ENCODE measurements at regions of chr12 and their contacts with region 1.

Region 1: GRCh38 chr12:53613821-53614220 is 12.4 kb downstream of the ATF7 start:
- DNase-seq: no peak
- ATAC-seq: no peak
- H3K4me3 Mint-ChIP-seq: no peak overlapping the region
- H3K27ac Mint-ChIP-seq: no peak overlapping the region
- H3K4me1 Mint-ChIP-seq: peaks cover 23% of the 10 kb centered on the region
- H3K27me3 Mint-ChIP-seq: no peaks in the 10 kb centered on the region
- CTCF ChIP-seq: no peak

Region 2: GRCh38 chr12:53625946-53626701 is 12.3 kb after region 1 on chr12 and contains the start of gene ATF7:
- CTCF ChIA-PET with region 1: interaction called, 31 read pairs
- POLR2A ChIA-PET with region 1: interaction called, 5 read pairs
- intact Hi-C with region 1: no loop called
- DNase-seq: peak; percentile 98
- ATAC-seq: peak; percentile 95
- H3K4me3 Mint-ChIP-seq: peak within 1 kb of the TSS; percentile 97
- H3K27ac Mint-ChIP-seq: peak within 1 kb of the TSS; percentile 98
- H3K4me1 Mint-ChIP-seq: peaks cover 38% of the 10 kb centered on the region
- H3K27me3 Mint-ChIP-seq: no peaks in the 10 kb centered on the region
- CTCF ChIP-seq: no peak
- total RNA-seq, gene ATF7: 22.0 to 22.6 TPM